GM13977 (cell line): ENCODE measurements at regions of chr16 and their contacts with region 1.

Region 1: DNA sequence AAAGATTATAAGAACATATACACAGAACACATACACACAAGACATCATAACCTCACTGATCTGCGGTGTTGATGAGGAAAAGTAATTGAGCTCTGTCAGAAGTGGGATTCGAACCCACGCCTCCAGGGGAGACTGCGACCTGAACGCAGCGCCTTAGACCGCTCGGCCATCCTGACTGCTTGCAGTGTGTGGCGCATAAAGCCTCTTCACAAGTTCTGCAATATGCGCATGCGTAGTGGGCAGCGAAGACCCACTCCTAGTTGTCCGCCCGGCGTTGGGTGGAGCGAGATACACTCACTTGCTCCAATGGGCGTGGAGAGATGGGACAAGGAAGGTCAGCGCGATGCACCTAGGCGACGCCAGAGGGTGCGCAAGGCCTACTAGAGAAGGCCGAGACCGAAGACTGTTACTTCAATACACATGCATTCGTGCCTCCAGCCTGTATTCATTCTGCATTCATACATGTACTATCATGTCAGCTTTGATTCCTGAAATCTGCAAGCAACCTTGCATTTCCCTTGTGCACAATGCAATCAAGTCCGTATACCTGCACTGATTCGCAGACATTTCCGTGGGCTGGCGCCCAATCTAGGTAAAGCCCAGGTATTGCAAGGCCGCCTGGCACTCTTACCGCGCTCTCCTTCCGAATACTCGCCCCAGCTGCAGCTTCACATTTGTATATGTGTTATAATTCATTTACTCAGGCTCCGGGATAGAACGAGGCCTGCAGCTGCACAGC is 16.1 kb upstream of the PLLP start:
- DNase-seq: peak; percentile 94
- CTCF ChIP-seq: peak; percentile 93

Region 2: DNA sequence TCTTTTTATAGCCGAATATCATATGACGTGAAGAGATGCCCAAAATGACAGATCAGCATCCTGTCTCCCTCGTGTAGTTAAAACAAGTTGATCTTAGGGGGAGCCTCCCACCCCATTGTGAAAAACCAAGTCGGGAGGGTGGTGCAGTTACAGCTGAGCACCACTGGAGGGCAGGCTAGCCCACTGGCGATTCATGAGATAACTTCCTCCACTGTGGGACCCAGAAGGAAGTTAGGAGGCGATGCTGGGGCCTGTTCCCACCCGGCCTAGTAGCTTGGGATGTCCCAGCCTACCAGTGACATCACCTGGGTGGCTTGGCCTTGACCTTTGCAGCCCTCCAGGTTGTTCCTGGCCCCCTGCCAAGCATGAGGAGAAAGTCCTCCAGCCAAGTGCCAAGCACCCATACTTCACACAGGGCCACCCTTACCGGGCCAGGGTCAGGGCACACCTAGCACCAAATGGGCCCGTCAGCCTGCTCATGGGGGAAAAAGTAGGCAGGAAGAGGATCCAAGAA is 216.2 kb before region 1 on chr16:
- in situ Hi-C with region 1: loop called (anchors 25 kb)
- DNase-seq: peak; percentile 88
- CTCF ChIP-seq: peak; percentile 97

Region 3: DNA sequence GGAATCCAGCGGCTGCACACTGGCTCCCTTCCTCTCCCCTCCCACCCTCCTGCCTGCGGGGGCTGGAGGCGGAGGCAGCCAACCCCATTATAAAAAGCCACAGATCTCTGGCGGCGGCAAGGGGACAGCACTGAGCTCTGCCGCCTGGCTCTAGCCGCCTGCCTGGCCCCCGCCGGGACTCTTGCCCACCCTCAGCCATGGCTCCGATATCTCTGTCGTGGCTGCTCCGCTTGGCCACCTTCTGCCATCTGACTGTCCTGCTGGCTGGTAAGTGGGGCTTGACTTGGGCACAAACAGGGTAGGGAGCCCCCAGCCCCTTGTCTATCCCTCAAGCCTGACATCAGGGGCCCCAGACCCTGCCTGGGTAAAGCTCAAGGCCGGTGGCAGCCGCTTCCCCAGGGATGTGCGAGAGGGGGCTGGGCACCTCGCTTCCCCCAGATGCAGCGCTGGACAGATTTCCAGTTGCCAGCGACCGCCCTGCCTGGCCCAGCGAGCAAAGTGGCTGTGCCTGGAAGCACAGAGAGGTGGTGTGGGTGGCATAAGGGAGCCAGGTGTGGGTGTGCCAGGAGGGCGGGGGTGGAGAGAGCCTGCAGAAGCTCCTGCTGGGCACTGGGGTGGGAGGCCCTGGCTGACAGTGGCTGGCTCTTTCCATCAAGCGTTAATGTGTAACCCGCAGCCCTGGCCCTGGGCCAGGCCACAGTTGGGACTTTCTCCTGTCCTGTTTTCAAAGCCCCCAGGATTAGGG is 72.0 kb after region 1 on chr16 and contains the start of gene CX3CL1:
- in situ Hi-C with region 1: loop called (anchors 10 kb)
- DNase-seq: no peak
- CTCF ChIP-seq: no peak

Region 4: DNA sequence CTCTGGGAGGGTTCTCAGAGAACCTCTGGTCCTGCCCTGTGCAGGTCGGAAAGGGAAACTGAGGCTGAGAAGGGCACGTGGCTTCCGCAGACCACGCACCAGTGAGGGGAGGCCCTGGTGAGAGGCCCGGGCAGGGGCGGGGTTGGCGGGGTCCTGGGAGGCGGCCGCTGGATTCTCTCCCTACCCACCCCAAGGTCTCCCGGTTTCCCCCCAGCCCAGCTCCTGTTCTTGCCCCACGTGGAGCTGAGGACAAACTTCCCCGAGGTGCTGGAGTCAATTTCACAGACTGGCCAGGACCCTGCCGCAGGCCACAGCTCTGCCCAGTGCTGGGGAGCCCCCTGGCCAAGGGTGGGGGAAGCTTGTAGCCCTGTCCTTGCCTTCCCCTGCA is 115.6 kb after region 1 on chr16:
- in situ Hi-C with region 1: loop called (anchors 5 kb)
- DNase-seq: no peak
- CTCF ChIP-seq: no peak

Region 5: GRCh38 chr16:58425756-58426494 is 1125.4 kb after region 1 on chr16:
- in situ Hi-C with region 1: no loop called
- DNase-seq: no peak
- CTCF ChIP-seq: no peak